Activated naive CD4-positive, alpha-beta T cell treated with anti-CD3 and anti-CD28 coated beads for 36 hours (primary cell): ENCODE measurements at regions of chr4 and their contacts with region 1.

Region 1: GRCh38 chr4:102535398-102536082 is 34.4 kb downstream of the NFKB1 start:
- DNase-seq: no peak
- H3K4me3 Mint-ChIP-seq: no peak overlapping the region
- H3K27ac Mint-ChIP-seq: peak overlapping the region; percentile 65
- H3K4me1 Mint-ChIP-seq: peaks cover 72% of the 10 kb centered on the region
- H3K27me3 Mint-ChIP-seq: no peaks in the 10 kb centered on the region

Region 2: GRCh38 chr4:102518703-102519131 is 16.8 kb before region 1 on chr4:
- CTCF ChIA-PET with region 1: interaction called, 5 read pairs
- intact Hi-C with region 1: loop called (anchors 1 kb)
- DNase-seq: no peak
- H3K4me3 Mint-ChIP-seq: peak overlapping the region; percentile 53
- H3K27ac Mint-ChIP-seq: peak overlapping the region; percentile 84
- H3K4me1 Mint-ChIP-seq: peaks cover 88% of the 10 kb centered on the region
- H3K27me3 Mint-ChIP-seq: no peaks in the 10 kb centered on the region

Region 3: DNA sequence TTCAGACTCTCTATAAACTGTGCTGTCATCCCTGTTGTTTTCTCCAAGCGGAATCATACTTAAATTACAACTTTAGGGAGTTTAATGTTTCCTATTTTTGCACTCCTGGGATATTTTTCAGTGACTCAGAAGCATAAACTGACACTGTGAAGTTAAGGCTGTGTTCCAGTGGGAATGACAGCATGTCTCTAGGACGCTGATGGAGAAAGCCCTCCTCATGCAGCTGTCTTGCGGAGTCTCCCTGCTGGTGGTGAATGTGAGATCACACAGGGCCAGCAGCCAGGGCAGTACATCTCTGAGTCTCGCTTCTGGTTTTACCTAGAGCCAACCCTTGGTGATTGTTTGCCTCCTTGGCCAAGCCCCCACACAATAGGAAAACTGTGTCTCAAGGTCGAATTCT is 18.9 kb after region 1 on chr4:
- CTCF ChIA-PET with region 1: interaction called, 3 read pairs
- intact Hi-C with region 1: loop called (anchors 1 kb)
- DNase-seq: no peak
- H3K4me3 Mint-ChIP-seq: no peak overlapping the region
- H3K27ac Mint-ChIP-seq: no peak overlapping the region
- H3K4me1 Mint-ChIP-seq: peaks cover 41% of the 10 kb centered on the region
- H3K27me3 Mint-ChIP-seq: no peaks in the 10 kb centered on the region

Region 4: DNA sequence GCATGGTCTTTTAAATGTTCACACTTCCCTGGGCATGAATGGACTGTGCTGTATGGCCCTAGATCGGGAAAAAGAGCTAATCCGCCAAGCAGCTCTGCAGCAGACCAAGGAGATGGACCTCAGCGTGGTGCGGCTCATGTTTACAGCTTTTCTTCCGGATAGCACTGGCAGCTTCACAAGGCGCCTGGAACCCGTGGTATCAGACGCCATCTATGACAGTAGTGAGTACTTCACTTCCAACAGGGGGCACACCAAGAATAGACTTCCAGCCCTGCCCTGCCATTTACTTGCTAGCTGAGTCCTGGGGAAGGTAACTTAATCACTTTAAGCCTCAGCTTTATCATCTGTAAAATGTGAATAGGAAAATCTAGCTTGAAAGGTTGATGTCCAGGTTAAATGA is 43.3 kb after region 1 on chr4:
- CTCF ChIA-PET with region 1: no interaction called
- intact Hi-C with region 1: loop called (anchors 1 kb)
- DNase-seq: peak; percentile 24
- H3K4me3 Mint-ChIP-seq: no peak overlapping the region
- H3K27ac Mint-ChIP-seq: no peak overlapping the region
- H3K4me1 Mint-ChIP-seq: peaks cover 65% of the 10 kb centered on the region
- H3K27me3 Mint-ChIP-seq: no peaks in the 10 kb centered on the region

Region 5: GRCh38 chr4:102627831-102628523 is 92.4 kb after region 1 on chr4:
- CTCF ChIA-PET with region 1: interaction called, 4 read pairs
- intact Hi-C with region 1: loop called (anchors 1 kb)
- DNase-seq: peak; percentile 62
- H3K4me3 Mint-ChIP-seq: peak overlapping the region; percentile 22
- H3K27ac Mint-ChIP-seq: peak overlapping the region; percentile 54
- H3K4me1 Mint-ChIP-seq: peaks cover 75% of the 10 kb centered on the region
- H3K27me3 Mint-ChIP-seq: no peaks in the 10 kb centered on the region